MCF 10A (cell line): ENCODE measurements at regions of chr1 and their contacts with region 1.

Region 1: GRCh38 chr1:185050823-185051451 is 5.6 kb downstream of the RNF2 start:
- DNase-seq: no peak
- H3K4me3 Mint-ChIP-seq: no peak overlapping the region
- H3K27ac Mint-ChIP-seq: no peak overlapping the region
- H3K4me1 Mint-ChIP-seq: peaks cover 11% of the 10 kb centered on the region
- H3K27me3 Mint-ChIP-seq: no peaks in the 10 kb centered on the region
- CTCF ChIP-seq: no peak

Region 2: DNA sequence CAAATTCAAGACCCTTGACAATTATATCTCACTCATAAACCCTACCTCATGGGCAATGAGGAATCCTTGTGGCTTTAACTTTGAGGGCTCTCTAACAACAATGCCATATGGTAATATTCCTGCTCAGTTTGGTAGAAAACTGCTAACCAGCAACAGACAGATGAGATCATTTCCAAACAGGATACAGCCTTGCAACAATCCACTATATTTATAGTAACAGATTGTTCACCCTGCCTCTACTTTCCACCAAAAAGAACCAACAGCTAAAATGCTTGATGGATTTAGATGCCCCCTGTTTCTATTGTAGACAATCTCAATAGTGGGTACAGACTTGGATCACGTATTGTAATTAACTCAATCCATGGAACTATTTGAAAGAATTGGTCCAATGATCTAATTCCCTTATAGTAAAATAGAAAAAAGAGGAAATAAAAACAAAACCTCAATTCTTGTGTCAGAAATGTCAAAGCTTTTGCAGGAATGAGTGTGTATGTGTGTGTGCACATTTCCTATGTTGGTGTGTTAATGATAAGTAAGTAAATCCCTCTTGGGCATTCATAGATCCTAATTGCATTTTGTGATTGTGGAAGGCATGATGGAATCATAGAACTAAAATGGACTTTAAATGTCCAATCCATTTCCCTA is 196.3 kb before region 1 on chr1:
- CTCF ChIA-PET with region 1: no interaction called
- POLR2A ChIA-PET with region 1: no interaction called
- intact Hi-C with region 1: no loop called
- DNase-seq: no peak
- H3K4me3 Mint-ChIP-seq: no peak overlapping the region
- H3K27ac Mint-ChIP-seq: no peak overlapping the region
- H3K4me1 Mint-ChIP-seq: no peaks in the 10 kb centered on the region
- H3K27me3 Mint-ChIP-seq: peaks cover 81% of the 10 kb centered on the region
- CTCF ChIP-seq: no peak

Region 3: GRCh38 chr1:184866991-184867788 is 183.7 kb before region 1 on chr1:
- CTCF ChIA-PET with region 1: no interaction called
- POLR2A ChIA-PET with region 1: no interaction called
- intact Hi-C with region 1: no loop called
- DNase-seq: peak; percentile 98
- H3K4me3 Mint-ChIP-seq: no peak overlapping the region
- H3K27ac Mint-ChIP-seq: no peak overlapping the region
- H3K4me1 Mint-ChIP-seq: peaks cover 8% of the 10 kb centered on the region
- H3K27me3 Mint-ChIP-seq: peaks cover 100% of the 10 kb centered on the region
- CTCF ChIP-seq: no peak

Region 4: GRCh38 chr1:185062710-185063370 is 11.9 kb after region 1 on chr1:
- CTCF ChIA-PET with region 1: interaction called, 11 read pairs
- POLR2A ChIA-PET with region 1: interaction called, 13 read pairs
- intact Hi-C with region 1: no loop called
- DNase-seq: no peak
- H3K4me3 Mint-ChIP-seq: no peak overlapping the region
- H3K27ac Mint-ChIP-seq: no peak overlapping the region
- H3K4me1 Mint-ChIP-seq: peaks cover 10% of the 10 kb centered on the region
- H3K27me3 Mint-ChIP-seq: no peaks in the 10 kb centered on the region
- CTCF ChIP-seq: no peak